Activated T-helper 1 cell treated with anti-CD3 and anti-CD28 coated beads, Interleukin-12 subunit alpha, Interleukin-12 subunit beta, Interleukin-2, Interleukin-4 antibody, amounts not matched to agents 30 ng/mL and 10 ng/mL and 1 ng/mL, durations not matched to agents 14 hours and 24 hours and 36 hours (primary cell): ENCODE measurements at regions of chr16 and their contacts with region 1.

Region 1: DNA sequence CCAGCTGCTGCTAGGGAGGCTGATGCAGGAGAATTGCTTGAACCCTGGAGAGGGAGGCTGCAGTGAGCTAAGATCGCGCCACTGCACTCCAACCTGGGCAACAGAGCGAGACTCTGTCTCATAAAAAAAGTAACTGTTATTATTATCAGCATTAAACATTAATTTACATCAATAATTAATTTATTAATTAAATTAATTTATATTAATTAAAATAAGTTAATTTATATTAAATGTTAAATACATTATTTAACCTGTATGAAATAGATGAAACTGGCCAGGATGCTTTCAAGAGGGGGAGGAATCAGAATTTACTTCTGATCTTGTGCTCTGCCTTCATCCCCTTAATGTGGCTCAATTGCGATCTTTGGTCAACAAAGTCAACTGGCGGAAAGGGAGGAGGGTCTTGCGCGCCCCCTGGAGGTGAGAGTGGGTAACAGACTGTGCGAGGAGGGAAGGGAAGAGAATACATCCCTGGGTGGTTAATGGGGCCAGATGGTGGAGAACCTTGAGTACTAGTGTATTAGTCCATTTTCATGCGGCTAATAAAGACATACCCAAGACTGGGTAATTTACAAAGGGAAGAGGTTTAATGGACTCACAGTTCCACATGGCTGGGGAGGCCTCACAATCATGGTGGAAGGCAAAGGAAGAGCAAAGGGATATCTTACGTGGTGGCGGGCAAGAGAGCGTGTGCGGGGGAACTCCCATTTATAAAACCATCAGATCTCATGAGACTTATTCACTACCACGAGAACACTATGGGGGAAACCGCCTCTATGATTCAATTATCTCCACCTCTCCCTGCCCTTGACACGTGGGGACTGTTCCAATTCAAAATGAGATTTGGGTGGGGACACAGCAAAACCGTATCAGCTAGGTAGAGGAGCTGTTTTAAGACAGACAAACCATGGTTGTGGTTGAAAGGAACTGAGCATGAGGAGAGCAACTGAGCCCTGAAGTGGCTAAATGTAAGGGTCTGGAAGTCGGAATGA is 15.7 kb upstream of the CPPED1 start:
- DNase-seq: peak; percentile 64
- H3K4me3 Mint-ChIP-seq: no peak overlapping the region
- H3K27ac Mint-ChIP-seq: no peak overlapping the region
- H3K4me1 Mint-ChIP-seq: peaks cover 12% of the 10 kb centered on the region
- H3K27me3 Mint-ChIP-seq: peaks cover 6% of the 10 kb centered on the region

Region 2: DNA sequence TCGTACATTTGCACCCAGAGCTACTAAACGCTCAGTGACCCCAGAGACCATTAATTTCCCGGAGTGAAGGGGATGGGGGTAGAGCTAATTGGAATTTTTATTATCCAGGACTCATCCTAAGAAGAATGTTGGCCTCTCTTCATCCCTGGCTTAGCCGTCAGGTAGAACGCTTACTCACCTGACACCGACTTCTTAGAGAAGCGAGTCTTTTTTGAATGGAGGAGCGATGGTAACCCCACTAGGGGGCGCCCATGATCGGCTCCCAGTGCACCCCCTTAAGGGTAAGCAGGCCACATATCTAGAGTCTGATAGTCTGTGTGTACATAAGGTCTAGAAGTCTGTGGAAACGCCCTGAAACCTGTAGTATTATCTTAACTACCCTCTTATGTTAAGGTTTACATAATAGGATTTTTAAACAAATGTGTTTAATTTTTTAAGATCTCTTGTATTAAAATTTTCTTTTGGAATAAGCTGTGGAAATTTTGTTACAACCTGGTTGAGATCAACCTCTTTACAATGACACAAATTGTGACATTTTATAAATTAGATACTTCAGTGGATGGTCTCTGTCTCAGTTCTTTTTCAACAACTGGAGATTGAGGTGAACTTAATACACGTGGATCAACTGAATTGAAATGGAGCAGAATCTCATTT is 245.6 kb before region 1 on chr16:
- intact Hi-C with region 1: loop called (anchors 1 kb)
- DNase-seq: peak; percentile 36
- H3K4me3 Mint-ChIP-seq: no peak overlapping the region
- H3K27ac Mint-ChIP-seq: no peak overlapping the region
- H3K4me1 Mint-ChIP-seq: peaks cover 27% of the 10 kb centered on the region
- H3K27me3 Mint-ChIP-seq: no peaks in the 10 kb centered on the region

Region 3: GRCh38 chr16:12716658-12717057 is 102.8 kb before region 1 on chr16:
- intact Hi-C with region 1: no loop called
- DNase-seq: no peak
- H3K4me3 Mint-ChIP-seq: no peak overlapping the region
- H3K27ac Mint-ChIP-seq: no peak overlapping the region
- H3K4me1 Mint-ChIP-seq: no peaks in the 10 kb centered on the region
- H3K27me3 Mint-ChIP-seq: peaks cover 2% of the 10 kb centered on the region

Region 4: DNA sequence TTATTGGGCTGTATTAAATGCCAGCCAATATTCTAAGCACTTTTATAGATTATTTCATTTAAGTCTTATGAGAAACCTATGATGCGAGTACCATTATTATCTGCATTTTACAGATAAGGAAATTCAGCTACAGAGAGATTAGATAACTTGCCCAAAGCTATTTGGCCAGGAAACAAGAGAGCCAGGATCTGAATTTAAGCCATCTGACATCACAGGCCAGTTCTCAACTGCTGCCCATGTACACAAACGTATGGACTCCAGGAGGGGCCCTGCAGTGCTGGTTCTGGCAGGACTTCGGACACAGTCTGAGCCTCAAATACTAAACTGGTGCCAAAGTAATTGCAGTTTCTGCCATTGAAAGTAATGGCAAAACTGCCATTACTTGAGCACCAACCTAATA is 55.9 kb before region 1 on chr16:
- intact Hi-C with region 1: no loop called
- DNase-seq: no peak
- H3K4me3 Mint-ChIP-seq: no peak overlapping the region
- H3K27ac Mint-ChIP-seq: no peak overlapping the region
- H3K4me1 Mint-ChIP-seq: no peaks in the 10 kb centered on the region
- H3K27me3 Mint-ChIP-seq: no peaks in the 10 kb centered on the region

Region 5: GRCh38 chr16:13351181-13351933 is 531.9 kb after region 1 on chr16:
- intact Hi-C with region 1: no loop called
- DNase-seq: no peak
- H3K4me3 Mint-ChIP-seq: no peak overlapping the region
- H3K27ac Mint-ChIP-seq: no peak overlapping the region
- H3K4me1 Mint-ChIP-seq: no peaks in the 10 kb centered on the region
- H3K27me3 Mint-ChIP-seq: no peaks in the 10 kb centered on the region